OCI-LY7 (cell line): ENCODE measurements at regions of chr5 and their contacts with region 1.

Region 1: DNA sequence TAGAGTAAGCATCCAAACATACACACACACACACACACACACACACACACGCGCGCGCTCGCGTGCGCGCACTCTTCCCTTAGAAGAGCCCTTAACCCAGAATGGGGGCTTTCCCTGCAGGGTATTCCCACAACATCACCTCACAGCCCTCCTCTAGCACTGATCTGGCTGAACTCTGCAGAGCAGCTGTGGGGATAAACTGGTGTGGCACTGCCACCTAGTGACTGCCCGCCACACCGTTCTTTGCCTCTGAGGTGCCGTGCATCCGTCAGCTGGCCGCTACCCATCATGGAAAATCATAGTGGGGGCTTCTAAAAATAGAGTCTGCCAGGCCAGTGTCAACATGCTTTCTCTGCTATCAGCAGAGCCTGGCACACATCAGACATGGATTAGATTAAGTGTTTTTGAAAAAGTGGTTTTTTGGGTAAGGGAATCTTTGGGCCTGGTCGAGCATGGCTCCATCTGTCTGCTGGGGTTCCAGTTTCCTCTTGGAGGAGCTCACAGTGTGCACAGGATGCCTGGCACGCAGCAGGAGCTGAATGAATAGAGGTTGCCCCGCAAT is 88.1 kb downstream of the KCNN2 start:
- DNase-seq: peak; percentile 53
- H3K4me3 ChIP-seq: no peak overlapping the region
- H3K27ac ChIP-seq: no peak overlapping the region
- H3K4me1 ChIP-seq: no peaks in the 10 kb centered on the region
- CTCF ChIP-seq: peak; percentile 85

Region 2: GRCh38 chr5:113612060-113612496 is 837.9 kb before region 1 on chr5:
- CTCF ChIA-PET with region 1: no interaction called
- POLR2A ChIA-PET with region 1: no interaction called
- intact Hi-C with region 1: loop called (anchors 2 kb)
- DNase-seq: peak; percentile 54
- H3K4me3 ChIP-seq: no peak overlapping the region
- H3K27ac ChIP-seq: no peak overlapping the region
- H3K4me1 ChIP-seq: no peaks in the 10 kb centered on the region
- CTCF ChIP-seq: peak; percentile 89

Region 3: GRCh38 chr5:113678924-113679575 is 770.9 kb before region 1 on chr5:
- CTCF ChIA-PET with region 1: interaction called, 3 read pairs
- POLR2A ChIA-PET with region 1: no interaction called
- intact Hi-C with region 1: loop called (anchors 1 kb)
- DNase-seq: peak; percentile 46
- H3K4me3 ChIP-seq: no peak overlapping the region
- H3K27ac ChIP-seq: no peak overlapping the region
- H3K4me1 ChIP-seq: no peaks in the 10 kb centered on the region
- CTCF ChIP-seq: peak; percentile 84

Region 4: GRCh38 chr5:114101153-114101552 is 348.8 kb before region 1 on chr5:
- CTCF ChIA-PET with region 1: no interaction called
- POLR2A ChIA-PET with region 1: no interaction called
- intact Hi-C with region 1: loop called (anchors 2 kb)
- DNase-seq: peak; percentile 39
- H3K4me3 ChIP-seq: no peak overlapping the region
- H3K27ac ChIP-seq: no peak overlapping the region
- H3K4me1 ChIP-seq: no peaks in the 10 kb centered on the region
- CTCF ChIP-seq: peak; percentile 75

Region 5: DNA sequence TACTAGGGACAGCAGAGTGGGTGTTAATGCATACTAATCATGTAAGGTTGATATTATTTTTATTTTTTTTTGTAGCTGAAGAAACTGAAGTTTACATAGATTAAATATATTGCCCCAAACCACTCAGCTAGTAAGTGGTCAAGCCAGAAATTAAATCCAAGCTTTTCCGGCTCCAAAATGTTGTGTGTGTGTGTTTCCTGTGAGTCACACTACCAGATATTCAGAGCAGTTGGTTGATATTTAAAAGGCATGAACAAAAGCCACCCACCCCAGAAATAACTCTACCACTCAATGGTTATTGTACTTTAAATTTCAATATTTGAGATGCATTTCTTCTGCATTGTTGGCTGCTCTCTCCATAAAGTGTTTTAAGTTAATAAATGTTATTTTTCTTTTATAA is 58.6 kb before region 1 on chr5:
- CTCF ChIA-PET with region 1: no interaction called
- POLR2A ChIA-PET with region 1: no interaction called
- intact Hi-C with region 1: no loop called
- DNase-seq: no peak
- H3K4me3 ChIP-seq: no peak overlapping the region
- H3K27ac ChIP-seq: no peak overlapping the region
- H3K4me1 ChIP-seq: no peaks in the 10 kb centered on the region
- CTCF ChIP-seq: no peak